ENCODE measurements at regions of chr1 and their contacts with region 1.

Region 1: GRCh38 chr1:233376382-233377110 is 49.0 kb downstream of the MAP3K21 start:
- DNase-seq: no peak
- H3K4me3 ChIP-seq: no peak overlapping the region
- H3K27ac ChIP-seq: no peak overlapping the region
- H3K4me1 ChIP-seq: no peaks in the 10 kb centered on the region
- H3K27me3 ChIP-seq: no peaks in the 10 kb centered on the region
- CTCF ChIP-seq: no peak
- POLR2A ChIP-seq: no peak

Region 2: DNA sequence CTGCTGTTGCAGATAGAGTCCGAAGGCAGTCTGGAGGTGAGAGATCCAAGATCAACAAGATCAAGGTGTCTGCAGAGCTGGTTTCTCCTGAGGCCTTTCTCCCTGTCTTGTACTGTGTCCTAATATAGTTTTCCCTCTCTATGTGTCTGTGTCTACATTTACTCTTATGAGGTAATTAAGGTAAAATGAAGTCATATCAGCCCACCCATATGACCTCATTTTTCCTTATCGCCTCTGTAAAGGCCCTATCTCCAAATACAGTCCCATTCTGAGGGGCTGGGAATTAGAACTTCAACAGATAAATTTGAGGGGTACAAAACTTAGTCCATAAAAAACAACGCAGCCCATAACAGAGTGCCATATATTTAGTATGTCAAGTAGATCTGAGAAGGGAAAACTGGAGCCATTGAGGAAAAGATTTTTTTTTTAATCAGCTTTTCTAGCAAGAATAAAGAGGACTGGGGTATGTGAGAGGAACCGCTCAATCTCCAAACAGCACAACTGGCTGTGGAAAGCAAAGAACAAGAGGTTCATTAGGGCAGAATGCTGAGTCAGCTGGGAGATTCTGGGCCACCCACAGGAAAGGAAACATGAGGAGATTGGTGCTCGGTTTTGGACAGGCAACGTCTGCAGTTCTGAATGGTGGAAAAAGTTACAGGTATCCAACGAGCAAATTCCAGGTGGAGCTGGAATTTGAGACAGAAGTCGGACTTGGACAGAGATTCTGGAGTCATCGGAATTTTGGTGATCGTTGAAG is 16.7 kb after region 1 on chr1:
- intact Hi-C with region 1: loop called (anchors 1 kb)
- DNase-seq: no peak
- H3K4me3 ChIP-seq: no peak overlapping the region
- H3K27ac ChIP-seq: no peak overlapping the region
- H3K4me1 ChIP-seq: no peaks in the 10 kb centered on the region
- H3K27me3 ChIP-seq: peaks cover 0 to 3% of the 10 kb centered on the region in 2 donors
- CTCF ChIP-seq: no peak
- POLR2A ChIP-seq: no peak